AG04449 (cell line): ENCODE measurements at regions of chr12 and their contacts with region 1.

Region 1: GRCh38 chr12:29073628-29074239 is 75.3 kb upstream of the FAR2 start:
- DNase-seq: no peak
- H3K4me3 ChIP-seq: no peak overlapping the region
- CTCF ChIP-seq: peak; percentile 50

Region 2: GRCh38 chr12:28909291-28909690 is 164.4 kb before region 1 on chr12:
- CTCF ChIA-PET with region 1: no interaction called
- POLR2A ChIA-PET with region 1: no interaction called
- DNase-seq: no peak
- H3K4me3 ChIP-seq: no peak overlapping the region
- CTCF ChIP-seq: no peak

Region 3: DNA sequence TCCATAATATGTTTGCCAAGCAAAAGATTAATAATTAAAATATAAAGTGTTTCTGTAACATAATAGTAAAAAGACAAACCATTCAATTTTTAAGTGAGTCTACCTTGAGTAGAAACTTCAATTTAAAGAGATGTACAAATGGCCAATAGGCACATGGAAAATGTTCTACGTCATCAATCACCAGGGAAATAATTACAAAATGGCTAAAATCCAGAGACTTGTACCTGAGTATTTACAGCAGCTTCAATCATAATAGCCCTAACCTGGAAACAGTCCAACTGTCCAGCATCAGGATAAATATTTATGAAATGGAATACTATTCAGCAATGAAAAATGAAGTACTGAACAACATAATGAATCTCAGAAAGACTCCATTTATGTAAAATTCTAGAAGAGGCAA is 20.2 kb before region 1 on chr12:
- CTCF ChIA-PET with region 1: interaction called, 13 read pairs
- POLR2A ChIA-PET with region 1: no interaction called
- DNase-seq: no peak
- H3K4me3 ChIP-seq: no peak overlapping the region
- CTCF ChIP-seq: no peak

Region 4: DNA sequence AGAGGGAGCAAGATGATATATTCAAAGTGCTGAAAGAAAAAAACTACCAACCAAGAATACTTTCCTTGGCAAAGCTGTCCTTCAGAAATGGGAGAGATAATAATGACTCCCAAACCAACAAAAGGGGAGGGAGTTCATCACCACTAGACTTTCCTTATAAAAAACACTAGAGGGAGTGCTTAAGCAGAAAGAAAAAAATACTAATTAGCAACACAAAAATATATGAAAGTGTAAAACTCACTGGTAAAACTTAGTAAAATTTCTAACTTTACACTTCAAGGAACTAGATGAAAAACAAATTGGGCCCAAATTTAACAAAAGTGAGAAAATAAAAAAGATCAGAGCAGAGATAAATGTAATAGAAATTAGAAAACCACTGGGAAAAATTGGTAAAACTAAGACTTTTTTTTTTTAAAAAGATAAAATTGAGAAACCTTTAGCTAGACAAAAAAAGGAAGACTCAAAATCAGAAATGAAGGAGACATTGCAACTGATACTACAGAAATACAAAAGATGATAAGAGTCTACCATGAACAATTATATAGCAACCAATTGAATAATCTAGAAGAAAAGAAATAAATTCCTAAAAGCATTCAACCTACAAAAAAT is 15.0 kb after region 1 on chr12:
- CTCF ChIA-PET with region 1: interaction called, 27 read pairs
- POLR2A ChIA-PET with region 1: no interaction called
- DNase-seq: no peak
- H3K4me3 ChIP-seq: no peak overlapping the region
- CTCF ChIP-seq: no peak

Region 5: GRCh38 chr12:29309320-29309902 is 235.7 kb after region 1 on chr12:
- CTCF ChIA-PET with region 1: interaction called, 13 read pairs
- POLR2A ChIA-PET with region 1: no interaction called
- DNase-seq: no peak
- H3K4me3 ChIP-seq: no peak overlapping the region
- CTCF ChIP-seq: peak; percentile 10

Region 6: DNA sequence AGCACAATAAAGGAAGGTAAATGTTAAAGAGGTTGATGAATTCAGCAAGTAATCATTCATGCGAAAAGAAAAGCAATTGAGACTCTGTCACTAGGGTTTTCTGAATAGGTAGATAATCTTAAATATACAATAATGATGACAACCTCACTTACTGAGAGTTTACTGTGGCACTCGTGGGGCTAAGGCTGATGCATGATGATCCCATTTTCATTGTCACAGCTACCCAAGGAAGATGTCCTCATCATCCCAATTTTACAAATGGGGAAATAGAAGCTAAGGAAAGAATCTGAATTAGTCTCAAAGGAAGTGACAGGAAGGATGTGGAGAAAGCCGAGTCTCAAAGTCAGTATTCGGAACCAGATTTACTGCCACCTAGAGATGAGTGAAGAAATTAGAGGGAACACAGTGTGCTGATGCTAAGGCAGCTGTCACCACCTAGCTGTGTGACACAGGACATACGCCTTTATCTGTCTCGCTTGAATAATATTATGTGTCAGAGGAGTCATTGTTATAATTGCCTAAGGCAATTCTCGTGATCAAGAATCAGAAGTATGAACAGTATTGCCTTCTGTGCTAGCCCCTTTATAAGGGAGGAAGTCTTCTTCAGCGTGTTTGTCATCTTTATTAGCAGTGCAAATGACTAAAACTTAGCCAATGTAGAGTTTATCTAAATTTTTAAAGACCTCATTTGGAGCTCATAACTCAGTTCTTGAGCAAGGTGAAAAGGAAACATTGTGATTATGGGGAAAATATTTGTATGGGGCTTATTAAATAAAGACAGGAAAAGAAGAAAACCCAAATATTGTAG is 244.0 kb after region 1 on chr12:
- CTCF ChIA-PET with region 1: interaction called, 10 read pairs
- POLR2A ChIA-PET with region 1: no interaction called
- DNase-seq: no peak
- H3K4me3 ChIP-seq: no peak overlapping the region
- CTCF ChIP-seq: peak; percentile 47